ENCODE measurements at regions of chr3 and their contacts with region 1.

Region 1: DNA sequence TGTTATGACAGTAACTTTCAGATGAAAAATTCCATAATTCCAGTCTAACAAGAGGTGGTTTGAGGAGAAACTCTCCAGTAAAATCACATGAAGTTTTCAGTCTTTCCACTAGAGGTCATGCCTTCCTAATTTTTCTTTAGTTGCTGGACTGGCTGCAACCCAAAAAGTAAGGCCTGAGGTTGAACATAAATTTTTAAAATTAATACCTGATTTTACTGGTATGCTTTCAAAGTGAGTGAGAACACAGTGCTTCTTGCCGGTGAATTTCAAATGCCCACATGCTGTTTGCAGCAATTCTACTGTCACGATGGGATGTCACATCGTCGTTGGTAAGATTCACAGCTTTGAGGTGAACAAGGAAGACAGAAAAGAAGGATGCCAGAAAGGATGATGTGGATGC is 89.0 kb upstream of the FGF12 start:
- DNase-seq: no peak
- H3K4me3 ChIP-seq: no peak overlapping the region
- H3K27ac ChIP-seq: no peak overlapping the region
- H3K4me1 ChIP-seq: peaks cover 0 to 26% (median 12%) of the 10 kb centered on the region in 4 donors
- H3K27me3 ChIP-seq: no peaks in the 10 kb centered on the region
- CTCF ChIP-seq: peak; percentile 23 to 77 (median 66)
- EP300 ChIP-seq: no peak
- POLR2A ChIP-seq: no peak

Region 2: DNA sequence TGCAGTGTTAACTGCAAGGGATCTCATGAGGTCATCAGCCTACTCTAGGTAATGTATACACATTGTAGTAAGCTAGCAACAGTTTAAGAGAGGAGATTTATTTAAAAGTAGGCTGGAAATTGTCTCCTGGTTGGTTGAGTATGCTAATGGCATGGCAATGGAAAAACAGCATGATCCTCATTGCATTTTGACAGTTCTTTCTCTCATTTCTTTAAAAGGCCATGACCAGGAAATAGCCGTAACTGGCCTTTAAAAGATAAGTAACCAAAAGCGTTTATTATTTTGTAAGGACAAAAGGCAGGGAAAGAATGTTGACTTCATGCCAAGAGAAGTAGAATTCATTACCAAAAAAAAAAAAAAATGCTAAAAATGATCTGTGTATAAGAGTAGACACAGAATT is 399.3 kb before region 1 on chr3:
- intact Hi-C with region 1: no loop called
- DNase-seq: no peak
- H3K4me3 ChIP-seq: no peak overlapping the region
- H3K27ac ChIP-seq: no peak overlapping the region
- H3K4me1 ChIP-seq: no peaks in the 10 kb centered on the region
- H3K27me3 ChIP-seq: no peaks in the 10 kb centered on the region
- CTCF ChIP-seq: no peak
- EP300 ChIP-seq: no peak
- POLR2A ChIP-seq: no peak

Region 3: GRCh38 chr3:192943393-192943792 is 127.0 kb after region 1 on chr3:
- intact Hi-C with region 1: no loop called
- DNase-seq: no peak
- H3K4me3 ChIP-seq: no peak overlapping the region
- H3K27ac ChIP-seq: no peak overlapping the region
- H3K4me1 ChIP-seq: peaks cover 0 to 8% (median 2%) of the 10 kb centered on the region in 4 donors
- H3K27me3 ChIP-seq: no peaks in the 10 kb centered on the region
- CTCF ChIP-seq: no peak
- EP300 ChIP-seq: no peak
- POLR2A ChIP-seq: no peak

Region 4: DNA sequence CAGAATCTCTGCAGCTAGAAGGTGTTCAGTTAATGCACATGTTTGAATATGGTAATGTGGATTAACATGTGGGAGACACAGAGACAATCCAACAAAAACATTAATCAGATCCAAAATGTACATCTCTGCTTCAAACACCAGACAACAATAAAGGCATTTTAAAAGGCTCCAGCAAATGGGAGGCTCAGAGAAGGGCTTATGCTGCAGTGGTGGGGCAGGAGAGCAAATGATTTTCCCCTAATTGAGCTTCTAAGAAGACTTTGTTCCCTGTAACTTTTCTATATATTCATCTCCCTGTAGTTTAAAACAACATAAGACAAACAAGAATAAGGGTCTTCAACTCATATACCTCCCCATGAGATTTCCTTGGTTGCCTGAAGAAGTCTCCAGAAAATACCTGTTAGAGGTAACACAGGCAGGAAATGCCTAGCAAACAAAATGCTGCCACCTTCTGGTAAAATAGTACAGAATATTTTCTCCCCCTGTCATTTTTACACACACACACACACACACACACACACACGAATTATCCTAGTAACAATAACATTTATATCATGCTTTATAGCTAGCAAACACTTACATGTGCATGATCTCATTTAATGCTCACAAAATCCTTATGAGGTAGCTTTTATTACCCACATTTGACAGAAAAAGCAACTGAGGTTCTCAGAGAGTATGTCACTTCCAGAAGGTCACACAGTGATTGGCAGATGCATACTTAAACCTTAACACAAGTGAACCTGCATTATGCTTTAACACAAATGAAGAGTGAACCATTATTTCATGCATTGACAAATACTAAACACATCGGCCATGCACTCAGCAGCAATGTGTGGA is 224.7 kb after region 1 on chr3:
- intact Hi-C with region 1: loop called (anchors 2 kb)
- DNase-seq: no peak
- H3K4me3 ChIP-seq: no peak overlapping the region
- H3K27ac ChIP-seq: no peak overlapping the region
- H3K4me1 ChIP-seq: no peaks in the 10 kb centered on the region
- H3K27me3 ChIP-seq: no peaks in the 10 kb centered on the region
- CTCF ChIP-seq: peak in 3 of 4 experiments; percentile 35 to 45 (median 36)
- EP300 ChIP-seq: no peak
- POLR2A ChIP-seq: no peak

Region 5: DNA sequence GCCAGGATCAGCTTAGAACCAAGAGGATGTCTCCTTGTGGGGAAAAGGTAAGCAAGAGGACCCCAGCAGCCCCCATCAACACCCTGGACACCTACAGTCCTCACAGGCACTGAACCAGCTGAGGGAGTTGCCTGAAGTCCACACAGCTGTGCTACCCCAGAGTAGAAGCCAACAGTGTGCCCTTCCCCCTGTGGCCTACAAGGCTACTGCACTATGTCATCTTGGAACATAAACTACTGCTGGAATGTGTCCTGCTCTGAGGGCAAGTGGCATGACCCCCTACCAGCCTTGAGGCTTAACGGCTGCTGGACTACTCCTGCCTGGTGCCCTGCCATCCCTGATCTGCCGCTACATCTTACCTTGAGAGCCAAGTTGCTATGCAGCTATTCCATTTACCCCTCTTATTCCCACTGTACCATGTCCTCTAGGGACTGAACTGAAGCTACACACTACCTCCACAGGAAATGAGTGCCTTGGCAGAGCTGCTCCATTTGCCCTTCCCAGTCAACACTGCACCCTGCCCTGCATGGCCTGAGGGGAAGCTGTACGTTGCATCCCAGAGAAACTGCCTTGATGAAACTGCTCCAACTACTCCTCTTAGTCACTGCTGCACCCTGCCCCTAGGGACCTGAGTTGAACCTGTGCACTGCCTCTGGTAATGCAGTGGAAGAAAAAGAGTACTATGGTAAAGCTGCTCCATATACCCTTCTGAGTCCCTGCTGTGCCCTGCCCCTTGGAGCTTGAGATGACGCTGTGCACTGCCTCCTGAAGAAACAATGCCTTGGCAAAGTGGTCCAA is 602.4 kb after region 1 on chr3:
- intact Hi-C with region 1: no loop called
- DNase-seq: no peak
- H3K4me3 ChIP-seq: no peak overlapping the region
- H3K27ac ChIP-seq: no peak overlapping the region
- H3K4me1 ChIP-seq: no peaks in the 10 kb centered on the region
- H3K27me3 ChIP-seq: no peaks in the 10 kb centered on the region
- CTCF ChIP-seq: no peak
- EP300 ChIP-seq: no peak
- POLR2A ChIP-seq: no peak